Activated CD4-positive, alpha-beta memory T cell treated with anti-CD3 and anti-CD28 coated beads for 36 hours (primary cell): ENCODE measurements at regions of chr5 and their contacts with region 1.

Region 1: GRCh38 chr5:173165177-173166016 is 21.1 kb downstream of the BNIP1 start:
- DNase-seq: no peak
- H3K4me3 Mint-ChIP-seq: no peak overlapping the region
- H3K27ac Mint-ChIP-seq: no peak overlapping the region
- H3K4me1 Mint-ChIP-seq: no peaks in the 10 kb centered on the region
- H3K27me3 Mint-ChIP-seq: no peaks in the 10 kb centered on the region

Region 2: GRCh38 chr5:173204185-173204979 is 39.0 kb after region 1 on chr5:
- CTCF ChIA-PET with region 1: interaction called, 5 read pairs
- POLR2A ChIA-PET with region 1: no interaction called
- intact Hi-C with region 1: loop called (anchors 5 kb)
- DNase-seq: no peak
- H3K4me3 Mint-ChIP-seq: no peak overlapping the region
- H3K27ac Mint-ChIP-seq: no peak overlapping the region
- H3K4me1 Mint-ChIP-seq: no peaks in the 10 kb centered on the region
- H3K27me3 Mint-ChIP-seq: peaks cover 28% of the 10 kb centered on the region

Region 3: GRCh38 chr5:173283318-173284288 is 118.2 kb after region 1 on chr5:
- CTCF ChIA-PET with region 1: no interaction called
- POLR2A ChIA-PET with region 1: no interaction called
- intact Hi-C with region 1: loop called (anchors 5 kb)
- DNase-seq: peak; percentile 81
- H3K4me3 Mint-ChIP-seq: no peak overlapping the region
- H3K27ac Mint-ChIP-seq: no peak overlapping the region
- H3K4me1 Mint-ChIP-seq: peaks cover 7% of the 10 kb centered on the region
- H3K27me3 Mint-ChIP-seq: peaks cover 52% of the 10 kb centered on the region